Activated naive CD4-positive, alpha-beta T cell treated with anti-CD3 and anti-CD28 coated beads for 36 hours (primary cell): ENCODE measurements at regions of chr17 and their contacts with region 1.

Region 1: GRCh38 chr17:21705021-21705601 is 12.8 kb downstream of the KCNJ18 start:
- DNase-seq: no peak
- H3K4me3 Mint-ChIP-seq: no peak overlapping the region
- H3K27ac Mint-ChIP-seq: no peak overlapping the region
- H3K4me1 Mint-ChIP-seq: no peaks in the 10 kb centered on the region
- H3K27me3 Mint-ChIP-seq: no peaks in the 10 kb centered on the region

Region 2: DNA sequence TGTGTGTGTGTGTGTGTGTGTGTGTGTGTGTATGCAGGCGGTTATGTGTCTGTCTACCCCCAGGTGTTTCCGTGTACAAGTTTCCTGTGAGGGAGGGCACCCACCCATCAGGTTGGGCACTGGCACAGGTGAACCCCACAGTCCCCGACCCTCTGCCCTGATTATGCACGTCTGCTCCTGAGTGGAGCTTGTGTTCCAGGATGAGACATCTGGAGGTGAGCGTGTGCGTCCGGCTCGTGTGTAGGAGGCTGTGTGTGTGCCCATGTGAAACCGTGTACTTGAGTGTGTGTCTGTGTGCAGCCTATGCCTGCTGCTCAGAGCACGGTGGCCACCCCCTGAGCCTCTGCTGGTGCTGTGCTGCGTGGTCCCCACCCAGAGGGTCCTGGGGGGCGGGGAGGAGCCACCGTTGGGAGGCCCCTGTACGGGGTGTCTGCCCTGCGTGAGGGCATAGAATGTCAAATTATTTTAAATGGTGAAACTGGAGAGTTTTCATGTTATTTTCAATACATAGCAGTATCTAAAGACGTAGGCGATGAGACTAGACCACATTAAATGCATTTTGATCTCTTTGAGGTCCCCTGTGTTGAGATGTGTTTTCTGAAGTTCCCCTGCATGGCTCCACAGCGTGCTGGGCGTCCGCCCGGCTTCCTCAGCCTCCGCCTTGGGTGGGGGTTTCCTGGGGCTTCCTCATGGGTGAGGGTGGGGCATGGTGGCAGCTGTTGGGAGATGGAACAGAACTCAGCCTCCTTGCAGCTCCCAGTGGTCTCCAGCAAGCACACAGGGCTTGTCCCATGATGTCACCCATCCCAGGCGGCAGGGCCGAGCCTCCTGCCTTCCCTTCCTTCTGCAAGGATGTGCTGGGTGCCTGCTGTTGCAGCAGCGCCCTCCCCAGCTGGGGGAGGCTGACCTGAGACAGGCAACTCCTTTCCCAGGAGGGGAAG is 285.5 kb before region 1 on chr17:
- CTCF ChIA-PET with region 1: no interaction called
- intact Hi-C with region 1: loop called (anchors 10 kb)
- DNase-seq: peak; percentile 68
- H3K4me3 Mint-ChIP-seq: peak overlapping the region; percentile 30
- H3K27ac Mint-ChIP-seq: no peak overlapping the region
- H3K4me1 Mint-ChIP-seq: peaks cover 34% of the 10 kb centered on the region
- H3K27me3 Mint-ChIP-seq: no peaks in the 10 kb centered on the region